ENCODE measurements at regions of chr21 and their contacts with region 1.

Region 1: DNA sequence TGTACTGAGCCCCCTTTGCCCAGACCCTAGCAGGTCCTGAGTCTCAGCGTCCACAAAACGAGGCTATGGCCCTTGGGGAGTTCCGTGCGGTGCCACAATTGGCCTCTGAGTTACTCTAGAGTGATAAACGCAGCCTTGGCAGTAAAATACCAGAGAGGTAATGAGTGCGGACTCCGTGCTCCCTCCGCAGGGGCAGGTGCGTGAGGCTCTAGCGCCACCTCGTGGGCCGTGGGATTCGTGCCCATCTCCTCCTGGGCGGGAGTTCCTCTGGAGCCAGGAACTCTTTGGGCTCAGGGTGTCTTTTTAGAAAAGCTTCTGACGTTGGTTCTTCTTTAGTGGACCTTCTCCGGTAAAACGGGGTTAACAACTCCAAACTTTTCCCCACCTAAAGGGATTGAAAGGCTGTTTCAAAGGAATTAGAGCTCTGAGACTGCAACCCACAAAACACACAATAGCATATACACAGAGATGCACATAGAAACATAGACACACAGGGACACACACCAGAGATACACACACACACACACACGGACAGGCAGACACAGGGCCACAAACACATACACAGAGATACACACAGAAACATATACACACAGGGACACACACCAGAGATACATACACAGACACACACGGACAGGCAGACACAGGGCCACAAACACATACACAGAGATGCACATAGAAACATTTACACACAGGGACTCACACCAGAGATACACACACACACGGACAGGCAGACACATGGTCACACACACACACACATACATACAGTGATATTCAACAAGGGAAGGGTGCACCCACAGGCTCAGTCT is 99.4 kb downstream of the KCNJ15 start:
- DNase-seq: peak; percentile 71 to 74 (median 73)
- H3K4me3 ChIP-seq: no peak overlapping the region
- H3K4me3 Mint-ChIP-seq: no peak overlapping the region
- H3K27ac ChIP-seq: no peak overlapping the region
- H3K27ac Mint-ChIP-seq: no peak overlapping the region
- H3K4me1 ChIP-seq: peaks cover 15% of the 10 kb centered on the region in 2 donors
- H3K4me1 Mint-ChIP-seq: peaks cover 21% of the 10 kb centered on the region
- H3K27me3 ChIP-seq: no peaks in the 10 kb centered on the region
- H3K27me3 Mint-ChIP-seq: peaks cover 4 to 10% (median 7%) of the 10 kb centered on the region in 3 donors
- CTCF ChIP-seq: peak; percentile 93

Region 2: GRCh38 chr21:37700641-37701202 is 655.5 kb before region 1 on chr21:
- intact Hi-C with region 1: loop called in 1 of 2 experiments (anchors 10 kb)
- DNase-seq: peak; percentile 34 to 61 (median 55)
- H3K4me3 ChIP-seq: no peak overlapping the region
- H3K4me3 Mint-ChIP-seq: no peak overlapping the region
- H3K27ac ChIP-seq: no peak overlapping the region
- H3K27ac Mint-ChIP-seq: no peak overlapping the region
- H3K4me1 ChIP-seq: no peaks in the 10 kb centered on the region
- H3K4me1 Mint-ChIP-seq: no peaks in the 10 kb centered on the region
- H3K27me3 ChIP-seq: no peaks in the 10 kb centered on the region
- H3K27me3 Mint-ChIP-seq: peaks cover 2 to 9% (median 2%) of the 10 kb centered on the region in 3 donors
- CTCF ChIP-seq: peak; percentile 81

Region 3: DNA sequence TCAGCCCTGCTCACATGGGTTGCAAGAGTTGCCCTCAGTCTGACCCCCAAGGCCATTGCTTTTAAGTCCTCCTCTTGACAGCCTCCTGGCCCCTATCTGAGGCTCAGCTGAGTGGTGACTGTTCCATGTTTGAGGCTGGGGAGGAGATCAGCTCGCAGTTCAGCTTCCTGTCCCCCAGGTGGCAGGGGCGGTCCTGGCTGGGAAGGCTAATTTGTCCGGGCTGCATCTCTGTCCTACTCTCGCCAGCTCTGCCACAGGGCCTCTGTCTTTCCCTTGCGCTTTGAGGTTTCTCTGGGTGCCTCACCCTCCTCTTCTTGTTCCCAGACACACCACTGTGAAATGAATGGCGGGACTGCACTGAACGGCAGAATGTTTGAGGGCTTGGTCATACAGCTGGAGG is 597.2 kb before region 1 on chr21:
- intact Hi-C with region 1: loop called in 1 of 2 experiments (anchors 5 kb)
- DNase-seq: peak; percentile 15 to 41 (median 35)
- H3K4me3 ChIP-seq: no peak overlapping the region
- H3K4me3 Mint-ChIP-seq: no peak overlapping the region
- H3K27ac ChIP-seq: no peak overlapping the region
- H3K27ac Mint-ChIP-seq: no peak overlapping the region
- H3K4me1 ChIP-seq: no peaks in the 10 kb centered on the region
- H3K4me1 Mint-ChIP-seq: no peaks in the 10 kb centered on the region
- H3K27me3 ChIP-seq: no peaks in the 10 kb centered on the region
- H3K27me3 Mint-ChIP-seq: peaks cover 0 to 6% (median 3%) of the 10 kb centered on the region in 3 donors
- CTCF ChIP-seq: peak; percentile 71

Region 4: GRCh38 chr21:38170280-38170679 is 185.9 kb before region 1 on chr21:
- intact Hi-C with region 1: loop called in 1 of 2 experiments (anchors 1 kb)
- DNase-seq: peak; percentile 52 to 67 (median 65)
- H3K4me3 ChIP-seq: no peak overlapping the region
- H3K4me3 Mint-ChIP-seq: no peak overlapping the region
- H3K27ac ChIP-seq: no peak overlapping the region
- H3K27ac Mint-ChIP-seq: peak overlapping the region in 2 of 7 donors; percentile 18 to 37
- H3K4me1 ChIP-seq: peaks cover 0 to 5% of the 10 kb centered on the region in 2 donors
- H3K4me1 Mint-ChIP-seq: peaks cover 6% of the 10 kb centered on the region
- H3K27me3 ChIP-seq: no peaks in the 10 kb centered on the region
- H3K27me3 Mint-ChIP-seq: peaks cover 4 to 5% (median 4%) of the 10 kb centered on the region in 3 donors
- CTCF ChIP-seq: peak; percentile 75

Region 5: DNA sequence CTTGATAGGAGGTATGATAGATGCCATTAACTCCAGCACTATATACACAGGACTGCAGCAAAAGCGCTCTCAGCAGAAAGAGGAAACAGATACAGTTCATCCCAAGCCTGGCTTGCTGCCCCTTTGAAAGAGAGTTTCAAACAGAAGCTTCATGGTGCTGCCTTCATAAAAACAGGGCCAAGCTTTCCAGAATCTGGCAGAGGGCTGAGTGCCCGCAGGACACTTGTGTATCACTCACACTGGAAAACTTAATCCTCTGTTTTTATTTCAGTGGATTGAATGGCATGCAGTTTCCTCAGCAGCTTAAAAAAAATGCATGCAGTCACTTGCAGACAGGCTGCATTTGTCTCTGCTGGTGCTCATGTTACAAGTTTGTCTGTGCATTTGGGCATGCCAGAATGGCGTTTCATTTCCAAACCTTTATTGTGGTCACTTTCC is 59.0 kb before region 1 on chr21:
- intact Hi-C with region 1: loop called in 1 of 2 experiments (anchors 5 kb)
- DNase-seq: peak in 2 of 3 donors; percentile 40 to 61
- H3K4me3 ChIP-seq: peak overlapping the region in 1 of 3 experiments; percentile 54
- H3K4me3 Mint-ChIP-seq: peak overlapping the region in 1 of 2 donors; percentile 67
- H3K27ac ChIP-seq: peak overlapping the region; percentile 53 to 89
- H3K27ac Mint-ChIP-seq: peak overlapping the region; percentile 89 to 96 (median 94)
- H3K4me1 ChIP-seq: peaks cover 66 to 89% of the 10 kb centered on the region in 2 donors
- H3K4me1 Mint-ChIP-seq: peaks cover 84% of the 10 kb centered on the region
- H3K27me3 ChIP-seq: no peaks in the 10 kb centered on the region
- H3K27me3 Mint-ChIP-seq: peaks cover 0 to 2% (median 0%) of the 10 kb centered on the region in 3 donors
- CTCF ChIP-seq: no peak